ENCODE measurements at regions of chr6 and their contacts with region 1.

Region 1: DNA sequence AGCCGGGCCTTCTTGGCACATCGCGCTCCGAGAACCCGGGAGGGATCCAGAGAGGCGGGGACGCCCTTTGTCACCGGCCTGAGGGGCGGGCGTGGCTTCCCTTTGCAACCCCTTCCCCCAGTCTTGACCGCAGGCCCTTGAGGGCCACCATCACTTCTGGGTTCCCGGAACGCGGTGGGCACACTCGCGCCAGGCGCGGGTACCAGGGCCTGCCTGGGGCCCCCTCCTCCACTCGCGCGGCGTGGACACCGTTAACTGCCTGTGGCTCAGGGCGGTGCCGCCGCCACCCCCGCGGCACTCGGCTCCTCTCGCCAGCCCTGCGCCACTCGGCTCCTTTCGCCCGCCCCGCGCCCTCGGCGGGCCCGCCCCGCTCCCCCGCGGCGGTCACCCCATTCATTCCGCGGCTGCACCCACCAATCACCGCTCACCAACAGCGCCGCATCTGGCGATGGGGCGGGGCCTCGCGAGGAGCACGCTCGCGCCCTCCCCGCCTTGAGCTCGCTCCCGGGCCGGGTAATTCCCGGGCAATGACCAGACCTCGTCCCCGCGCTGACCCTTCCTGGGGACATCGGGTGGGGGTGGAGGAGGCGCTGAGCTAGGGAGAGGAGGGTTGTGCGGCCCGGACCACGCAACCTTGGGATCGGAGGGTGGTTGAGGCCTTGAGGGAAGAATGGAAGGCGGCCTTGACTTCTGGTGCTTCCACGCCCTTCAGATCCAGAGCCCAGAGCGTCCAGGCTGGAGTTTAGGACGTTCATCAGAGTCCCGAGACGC is 10.5 kb upstream of the ELOVL5 start:
- DNase-seq: peak; percentile 77 to 91 (median 86)
- ATAC-seq: peak; percentile 72 to 80
- H3K4me3 Mint-ChIP-seq: peak overlapping the region; percentile 87 to 94 (median 92)
- H3K27ac Mint-ChIP-seq: peak overlapping the region; percentile 93 to 98 (median 96)
- H3K4me1 Mint-ChIP-seq: peaks cover 24 to 54% (median 45%) of the 10 kb centered on the region in 4 donors
- H3K27me3 Mint-ChIP-seq: no peaks in the 10 kb centered on the region

Region 2: DNA sequence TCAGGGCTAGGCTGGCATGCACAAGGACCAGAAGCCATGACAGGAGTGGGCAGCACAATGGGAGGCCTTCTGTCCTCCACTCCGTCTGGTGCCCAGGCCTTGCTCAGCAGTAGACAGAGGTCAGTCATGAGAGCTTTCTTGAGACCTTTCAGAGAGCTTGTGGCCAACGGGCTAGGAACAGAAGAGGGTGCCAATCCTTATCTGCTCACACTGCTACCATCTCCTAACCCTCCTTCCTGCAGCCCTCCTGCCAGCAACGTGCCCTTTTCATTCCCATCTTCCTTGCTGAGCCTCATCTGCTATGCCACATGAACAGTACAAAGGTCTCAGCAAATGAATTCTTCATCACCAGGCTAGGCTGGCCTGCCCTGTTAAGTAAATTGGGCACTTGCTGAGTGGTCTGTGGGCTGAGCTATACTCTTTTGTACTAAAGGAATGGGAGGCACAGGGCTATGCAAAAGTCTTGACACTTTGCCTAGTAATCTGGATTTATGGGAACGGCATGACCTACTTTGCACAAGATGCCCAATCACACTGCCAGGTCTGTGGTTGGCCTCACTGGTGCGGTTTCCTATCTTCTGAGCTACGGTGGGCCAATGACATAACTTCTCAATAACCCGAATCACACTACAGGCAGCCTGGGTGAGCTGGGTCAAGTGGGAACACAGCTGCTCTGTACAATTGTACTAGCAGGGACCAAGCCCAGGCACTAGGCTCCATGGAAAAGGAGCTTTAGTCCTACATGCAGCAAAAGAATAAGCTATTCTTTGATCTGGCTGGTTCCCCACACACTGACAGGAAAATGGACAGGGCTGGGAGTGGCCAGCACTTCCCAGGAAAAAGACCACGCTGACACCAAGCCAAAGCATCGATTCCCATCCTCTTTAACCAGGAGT is 58.4 kb before region 1 on chr6:
- POLR2A ChIA-PET with region 1: interaction called, 12 read pairs
- DNase-seq: no peak
- ATAC-seq: peak in 1 of 2 donors; percentile 6
- H3K4me3 Mint-ChIP-seq: peak overlapping the region in 8 of 10 donors; percentile 11 to 49 (median 38)
- H3K27ac Mint-ChIP-seq: peak overlapping the region in 9 of 10 donors; percentile 13 to 84 (median 61)
- H3K4me1 Mint-ChIP-seq: peaks cover 36 to 83% (median 65%) of the 10 kb centered on the region in 4 donors
- H3K27me3 Mint-ChIP-seq: no peaks in the 10 kb centered on the region

Region 3: DNA sequence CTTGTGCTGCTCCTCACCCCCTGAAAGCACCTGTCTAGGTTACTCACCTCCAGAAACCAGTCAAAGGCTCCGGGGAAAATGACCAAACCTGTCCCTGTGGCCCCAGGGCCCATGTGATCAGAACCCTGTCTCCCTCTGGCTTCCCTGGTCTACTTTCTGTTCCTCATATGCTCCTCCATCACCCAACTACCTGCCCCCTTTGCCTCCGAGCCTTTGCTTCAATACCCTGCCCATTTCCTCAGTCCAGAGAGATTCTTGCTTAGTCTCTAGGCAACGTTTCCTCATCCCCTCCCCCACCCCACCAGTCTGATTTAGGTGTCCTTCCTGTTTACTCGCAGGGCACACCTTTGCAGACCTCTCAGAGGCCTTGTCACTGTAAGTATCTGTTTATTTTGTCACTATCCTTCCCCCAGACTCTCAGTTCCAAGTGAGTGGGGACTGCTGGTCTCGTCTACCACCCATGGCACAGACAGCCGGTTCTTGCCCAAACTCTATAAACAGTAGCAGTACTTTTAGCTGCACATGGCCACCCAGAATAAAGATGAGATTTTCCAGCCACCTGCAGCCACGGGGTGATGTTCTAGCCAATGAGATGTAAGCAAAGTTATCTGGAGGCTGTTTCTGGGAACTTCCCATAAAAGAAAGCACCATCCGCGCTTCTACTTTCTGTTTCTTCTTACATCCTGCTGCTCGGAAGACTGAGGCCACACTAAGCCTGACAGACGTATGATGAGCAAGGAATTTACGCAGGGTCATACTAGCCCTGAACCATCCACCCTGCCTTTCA is 23.9 kb before region 1 on chr6:
- POLR2A ChIA-PET with region 1: interaction called, 18 read pairs
- DNase-seq: peak; percentile 28 to 89 (median 72)
- ATAC-seq: peak; percentile 73 to 85
- H3K4me3 Mint-ChIP-seq: peak overlapping the region; percentile 84 to 99 (median 90)
- H3K27ac Mint-ChIP-seq: peak overlapping the region; percentile 96 to 100 (median 100)
- H3K4me1 Mint-ChIP-seq: peaks cover 43 to 96% (median 88%) of the 10 kb centered on the region in 4 donors
- H3K27me3 Mint-ChIP-seq: no peaks in the 10 kb centered on the region

Region 4: GRCh38 chr6:53432318-53433161 is 73.3 kb after region 1 on chr6:
- POLR2A ChIA-PET with region 1: no interaction called
- DNase-seq: no peak
- ATAC-seq: no peak
- H3K4me3 Mint-ChIP-seq: no peak overlapping the region
- H3K27ac Mint-ChIP-seq: no peak overlapping the region
- H3K4me1 Mint-ChIP-seq: peaks cover 4 to 14% (median 10%) of the 10 kb centered on the region in 4 donors
- H3K27me3 Mint-ChIP-seq: no peaks in the 10 kb centered on the region